Activated naive CD4-positive, alpha-beta T cell treated with anti-CD3 and anti-CD28 coated beads, Interleukin-2, amount 10 ng/mL, durations not matched to agents 7 days and 5 days (primary cell): ENCODE measurements at regions of chr7 and their contacts with region 1.

Region 1: GRCh38 chr7:37408291-37409228 is 40.1 kb downstream of the ELMO1 start:
- DNase-seq: peak; percentile 33
- H3K4me3 Mint-ChIP-seq: peak overlapping the region; percentile 73
- H3K27ac Mint-ChIP-seq: peak overlapping the region; percentile 91
- H3K4me1 Mint-ChIP-seq: peaks cover 75% of the 10 kb centered on the region
- H3K27me3 Mint-ChIP-seq: no peaks in the 10 kb centered on the region

Region 2: DNA sequence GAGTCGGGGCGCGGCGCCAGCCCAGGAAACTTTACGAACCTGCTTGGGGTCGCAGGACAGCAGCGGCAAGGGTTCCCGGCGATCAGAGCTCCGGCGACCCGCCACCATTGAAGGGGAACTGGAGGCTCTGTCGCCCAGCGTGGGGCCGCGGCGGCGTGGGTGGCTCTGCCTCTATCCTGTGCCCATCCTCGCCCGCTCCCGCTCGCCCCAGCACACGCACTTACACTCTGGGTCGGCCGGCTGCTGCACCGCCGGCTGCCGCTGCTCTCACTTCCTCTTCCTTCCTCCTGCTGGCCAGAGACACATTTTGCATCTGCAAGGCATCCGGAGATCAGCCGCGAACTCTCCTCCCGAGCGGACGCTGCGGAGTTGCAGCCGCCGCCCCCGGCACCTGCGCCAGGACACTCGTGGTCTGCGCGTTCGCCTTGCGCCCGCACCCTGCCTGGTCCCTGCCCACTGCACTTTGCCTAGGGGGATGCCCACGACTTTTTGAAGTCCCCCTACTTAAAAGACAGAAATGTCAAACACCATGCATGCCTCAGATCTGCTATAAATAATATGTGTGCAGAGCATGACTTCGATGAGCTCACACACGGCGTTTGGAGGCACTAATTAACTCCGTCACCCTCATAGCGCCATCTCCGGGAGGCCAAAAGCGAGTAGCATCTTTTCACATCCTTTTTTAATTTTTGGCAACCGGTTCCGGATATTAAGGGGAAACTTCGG is 40.2 kb after region 1 on chr7 and contains the start of gene ELMO1:
- CTCF ChIA-PET with region 1: interaction called, 23 read pairs
- DNase-seq: peak; percentile 89
- H3K4me3 Mint-ChIP-seq: peak within 1 kb of the TSS; percentile 88
- H3K27ac Mint-ChIP-seq: peak within 1 kb of the TSS; percentile 95
- H3K4me1 Mint-ChIP-seq: peaks cover 63% of the 10 kb centered on the region
- H3K27me3 Mint-ChIP-seq: peaks cover 19% of the 10 kb centered on the region

Region 3: DNA sequence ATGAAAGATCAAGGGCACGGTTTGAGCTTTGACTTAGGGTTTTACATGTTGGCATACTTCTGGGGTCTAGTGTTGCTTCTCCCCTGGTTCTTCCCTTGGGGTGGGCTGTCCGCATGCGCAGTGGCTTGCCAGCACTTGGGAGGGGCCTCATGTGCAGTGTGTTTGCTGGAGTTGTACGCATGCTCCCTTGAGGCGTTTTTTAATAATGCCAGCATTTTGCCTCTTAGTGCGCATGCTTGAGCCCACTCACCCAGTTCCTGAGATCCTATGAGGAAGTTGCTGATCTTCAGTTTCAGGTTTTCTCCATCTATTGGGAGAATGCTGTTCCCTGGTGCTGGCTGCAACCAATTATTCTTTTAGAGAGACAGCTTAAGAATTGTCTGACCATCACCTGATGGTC is 161.6 kb after region 1 on chr7:
- CTCF ChIA-PET with region 1: no interaction called
- DNase-seq: no peak
- H3K4me3 Mint-ChIP-seq: no peak overlapping the region
- H3K27ac Mint-ChIP-seq: no peak overlapping the region
- H3K4me1 Mint-ChIP-seq: no peaks in the 10 kb centered on the region
- H3K27me3 Mint-ChIP-seq: peaks cover 7% of the 10 kb centered on the region